Activated CD4-positive, alpha-beta T cell treated with anti-CD3 and anti-CD28 coated beads, Interleukin-2, amount 10 ng/mL, durations not matched to agents 24 days and 14 days (primary cell): ENCODE measurements at regions of chr13 and their contacts with region 1.

Region 1: GRCh38 chr13:60417734-60418133 is 20.7 kb downstream of the TDRD3 start:
- DNase-seq: no peak
- H3K4me3 Mint-ChIP-seq: no peak overlapping the region
- H3K27ac Mint-ChIP-seq: no peak overlapping the region
- H3K4me1 Mint-ChIP-seq: peaks cover 7% of the 10 kb centered on the region
- H3K27me3 Mint-ChIP-seq: no peaks in the 10 kb centered on the region

Region 2: GRCh38 chr13:60396783-60397703 is 20.7 kb before region 1 on chr13 and contains the start of gene TDRD3:
- intact Hi-C with region 1: loop called (anchors 1 kb)
- DNase-seq: peak; percentile 93
- H3K4me3 Mint-ChIP-seq: peak within 1 kb of the TSS; percentile 97
- H3K27ac Mint-ChIP-seq: peak within 1 kb of the TSS; percentile 98
- H3K4me1 Mint-ChIP-seq: peaks cover 36% of the 10 kb centered on the region
- H3K27me3 Mint-ChIP-seq: no peaks in the 10 kb centered on the region
- total RNA-seq, gene TDRD3: 19.4 and 19.7 TPM in 2 replicates

Region 3: DNA sequence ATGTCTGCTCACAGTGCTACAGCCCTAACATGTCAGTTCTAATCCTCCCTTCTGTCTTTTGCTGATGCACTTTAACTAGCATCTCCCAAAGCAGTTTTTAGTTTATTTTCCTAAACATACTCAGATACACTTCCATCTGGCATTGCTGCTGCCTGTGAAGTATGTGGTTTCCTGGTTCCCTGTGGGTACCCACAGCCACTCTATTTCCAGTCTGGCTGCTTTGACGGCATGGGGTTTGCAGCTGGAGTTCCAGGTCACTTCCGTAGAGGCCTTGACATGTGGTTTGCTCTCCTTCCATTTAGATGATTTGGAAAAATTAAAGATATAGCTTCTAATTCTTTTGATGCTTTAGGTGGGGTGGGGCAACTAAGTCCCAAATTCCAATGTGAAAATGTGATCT is 622.4 kb after region 1 on chr13:
- intact Hi-C with region 1: no loop called
- DNase-seq: no peak
- H3K4me3 Mint-ChIP-seq: no peak overlapping the region
- H3K27ac Mint-ChIP-seq: no peak overlapping the region
- H3K4me1 Mint-ChIP-seq: no peaks in the 10 kb centered on the region
- H3K27me3 Mint-ChIP-seq: no peaks in the 10 kb centered on the region